Panc1 (cell line): ENCODE measurements at regions of chr2 and their contacts with region 1.

Region 1: GRCh38 chr2:88874063-88874657 is 182.7 kb downstream of the RPIA start:
- DNase-seq: peak; percentile 30
- ATAC-seq: peak; percentile 81; the same call in 1 of the 2 replicates
- H3K4me3 ChIP-seq: no peak overlapping the region
- H3K27ac ChIP-seq: no peak overlapping the region
- H3K4me1 ChIP-seq: no peaks in the 10 kb centered on the region
- H3K27me3 ChIP-seq: peaks cover 4% of the 10 kb centered on the region
- CTCF ChIP-seq: peak; percentile 76; the same call in 1 of the 2 replicates

Region 2: GRCh38 chr2:88669371-88670214 is 204.6 kb before region 1 on chr2:
- CTCF ChIA-PET with region 1: no interaction called
- POLR2A ChIA-PET with region 1: no interaction called
- in situ Hi-C with region 1: no loop called
- intact Hi-C with region 1: no loop called
- DNase-seq: no peak
- ATAC-seq: 0 out of 2 replicates have a peak, but pooled peaks have one; percentile 69
- H3K4me3 ChIP-seq: no peak overlapping the region
- H3K27ac ChIP-seq: no peak overlapping the region
- H3K4me1 ChIP-seq: no peaks in the 10 kb centered on the region
- H3K27me3 ChIP-seq: 0 out of 2 replicates have a peak, but pooled peaks cover 2% of the 10 kb centered on the region
- CTCF ChIP-seq: peak; percentile 74

Region 3: DNA sequence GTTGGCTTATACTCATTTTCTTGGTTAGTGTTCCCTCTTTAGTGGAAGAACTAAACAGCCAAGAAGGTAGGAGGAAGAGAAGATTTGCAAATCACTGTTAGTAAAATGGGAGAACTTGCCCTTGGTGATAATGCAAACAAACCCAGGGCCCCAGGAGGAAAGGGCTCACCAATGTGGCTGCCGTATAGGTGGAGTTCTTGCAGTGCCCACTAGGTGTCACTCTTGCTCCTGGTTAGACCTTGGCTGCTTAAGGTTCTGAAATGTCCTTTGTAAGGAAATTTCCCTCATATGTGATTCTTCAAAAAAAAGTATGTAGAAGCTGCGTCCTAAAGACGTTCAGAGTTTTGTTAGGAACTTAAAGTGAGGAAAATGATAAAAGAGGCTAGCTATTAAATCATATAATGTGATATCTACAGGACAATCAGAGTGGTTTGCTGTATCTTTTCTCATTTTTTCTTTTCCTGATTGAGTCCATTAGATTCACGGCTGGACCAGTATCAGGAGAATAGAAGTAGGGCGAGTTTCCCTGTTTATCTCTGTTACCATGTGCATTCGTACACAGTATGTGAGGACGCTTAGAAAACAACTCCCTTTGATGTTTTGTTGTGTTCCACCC is 134.1 kb before region 1 on chr2:
- CTCF ChIA-PET with region 1: no interaction called
- POLR2A ChIA-PET with region 1: no interaction called
- in situ Hi-C with region 1: no loop called
- intact Hi-C with region 1: loop called (anchors 5 kb)
- DNase-seq: peak; percentile 63
- ATAC-seq: peak; percentile 90
- H3K4me3 ChIP-seq: no peak overlapping the region
- H3K27ac ChIP-seq: no peak overlapping the region
- H3K4me1 ChIP-seq: no peaks in the 10 kb centered on the region
- H3K27me3 ChIP-seq: no peaks in the 10 kb centered on the region
- CTCF ChIP-seq: peak; percentile 93

Region 4: GRCh38 chr2:88903749-88904353 is 29.7 kb after region 1 on chr2:
- CTCF ChIA-PET with region 1: no interaction called
- POLR2A ChIA-PET with region 1: no interaction called
- in situ Hi-C with region 1: no loop called
- intact Hi-C with region 1: no loop called
- DNase-seq: no peak
- ATAC-seq: peak; percentile 83
- H3K4me3 ChIP-seq: no peak overlapping the region
- H3K27ac ChIP-seq: no peak overlapping the region
- H3K4me1 ChIP-seq: no peaks in the 10 kb centered on the region
- H3K27me3 ChIP-seq: peaks cover 7% of the 10 kb centered on the region; the same call in 1 of the 2 replicates
- CTCF ChIP-seq: peak; percentile 83